ENCODE measurements at regions of chr20 and their contacts with region 1.

Region 1: DNA sequence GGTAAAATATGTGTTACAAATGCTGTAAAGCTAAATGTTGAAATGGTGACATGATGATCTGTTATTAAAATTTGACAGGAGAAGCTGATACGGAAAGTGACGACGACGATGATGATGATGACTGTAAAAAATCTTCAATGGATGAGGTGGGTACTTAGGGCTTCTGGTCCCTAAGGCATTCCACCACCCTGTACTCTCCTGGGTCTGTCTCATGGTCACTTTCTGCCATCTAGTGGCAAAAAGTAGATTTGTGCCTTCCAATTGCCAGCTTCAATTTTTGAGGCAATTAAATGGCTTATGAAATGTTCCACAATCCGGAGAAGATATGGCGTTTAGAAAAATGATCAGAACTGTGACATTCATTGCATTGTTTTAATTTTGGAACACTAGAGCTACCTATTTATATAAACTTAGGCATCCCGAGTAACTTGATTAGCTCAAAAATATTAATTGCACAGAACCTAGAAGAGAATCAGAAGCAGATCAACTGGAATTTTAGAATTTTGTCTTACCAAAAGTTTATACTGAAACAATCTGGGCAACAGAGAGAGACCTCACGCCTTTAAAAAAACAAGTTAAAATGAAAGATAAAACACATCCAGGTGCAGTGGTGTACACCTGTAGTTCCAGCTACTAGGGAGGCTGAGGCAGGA is 346.5 kb upstream of the PLCB4 start:
- DNase-seq: peak; percentile 23
- H3K4me3 Mint-ChIP-seq: no peak overlapping the region
- H3K27ac Mint-ChIP-seq: no peak overlapping the region
- H3K4me1 Mint-ChIP-seq: no peaks in the 10 kb centered on the region
- H3K27me3 Mint-ChIP-seq: no peaks in the 10 kb centered on the region

Region 2: DNA sequence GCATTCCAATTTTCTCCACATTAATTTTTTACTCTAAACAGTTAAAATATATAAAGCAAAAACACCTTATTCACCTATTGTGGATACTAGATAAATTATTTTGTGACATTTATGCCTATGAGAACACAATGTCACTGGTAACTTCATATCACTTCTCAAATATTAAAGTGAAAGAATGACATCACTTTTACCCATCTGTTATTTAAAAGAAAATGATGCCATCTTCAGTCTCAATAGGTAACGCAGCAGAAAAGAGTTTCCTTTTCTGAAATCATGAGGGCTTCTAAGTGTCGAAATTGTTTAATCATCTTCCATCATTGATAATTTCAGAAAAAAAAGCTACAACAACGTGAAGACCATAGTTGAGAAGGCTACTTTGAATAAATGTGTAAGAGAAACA is 785.1 kb before region 1 on chr20:
- CTCF ChIA-PET with region 1: interaction called, 22 read pairs
- POLR2A ChIA-PET with region 1: no interaction called
- DNase-seq: no peak
- H3K4me3 Mint-ChIP-seq: no peak overlapping the region
- H3K27ac Mint-ChIP-seq: no peak overlapping the region
- H3K4me1 Mint-ChIP-seq: no peaks in the 10 kb centered on the region
- H3K27me3 Mint-ChIP-seq: peaks cover 11% of the 10 kb centered on the region

Region 3: GRCh38 chr20:8043687-8044282 is 678.6 kb before region 1 on chr20:
- CTCF ChIA-PET with region 1: interaction called, 49 read pairs
- POLR2A ChIA-PET with region 1: no interaction called
- DNase-seq: no peak
- H3K4me3 Mint-ChIP-seq: no peak overlapping the region
- H3K27ac Mint-ChIP-seq: no peak overlapping the region
- H3K4me1 Mint-ChIP-seq: peaks cover 1% of the 10 kb centered on the region
- H3K27me3 Mint-ChIP-seq: peaks cover 21% of the 10 kb centered on the region

Region 4: DNA sequence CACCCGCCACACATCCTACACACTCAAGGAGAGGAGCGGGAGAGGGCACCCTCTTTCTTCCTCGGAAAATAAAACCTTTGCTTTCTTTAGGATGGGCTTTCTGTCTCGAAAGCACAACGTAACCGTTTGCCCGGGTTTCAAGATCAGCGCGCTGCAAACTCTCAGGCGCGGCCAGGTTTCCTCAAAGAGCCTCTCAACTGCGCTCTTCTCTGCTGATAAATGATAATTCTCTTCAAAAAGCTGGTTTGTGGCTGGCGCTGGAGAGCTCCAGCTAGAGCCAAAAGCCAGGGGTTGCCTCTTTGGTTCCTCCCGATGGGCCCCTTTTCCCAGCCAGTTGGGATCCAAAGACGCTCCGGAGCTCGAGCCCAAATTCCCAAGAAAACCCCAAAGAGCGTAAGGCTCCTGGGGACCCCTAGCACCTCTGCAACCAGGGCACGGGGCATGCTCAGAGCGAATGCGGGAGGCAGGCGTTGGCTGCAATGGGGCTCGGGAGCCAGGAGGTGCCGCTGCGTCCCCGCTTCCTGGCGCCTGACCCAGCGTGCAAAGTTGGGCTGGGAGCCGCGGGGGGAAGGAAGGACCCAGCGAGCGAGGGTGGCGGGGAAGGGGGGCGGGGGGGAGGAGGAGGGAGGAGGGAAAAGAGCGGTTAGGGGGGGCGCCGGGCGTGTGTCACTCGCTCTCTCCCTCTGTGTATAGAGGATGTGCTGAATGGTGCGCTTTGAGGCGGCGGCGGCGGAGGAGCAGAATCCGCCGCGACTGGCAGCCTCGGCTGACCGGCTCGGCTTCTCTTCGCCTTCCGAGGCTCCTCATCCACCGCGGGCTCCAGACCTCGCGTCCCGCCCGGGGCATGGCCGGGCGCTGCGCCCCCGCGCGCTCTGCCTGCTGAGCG is 590.6 kb before region 1 on chr20 and contains the start of gene PLCB1:
- CTCF ChIA-PET with region 1: interaction called, 13 read pairs
- POLR2A ChIA-PET with region 1: no interaction called
- DNase-seq: peak; percentile 79
- H3K4me3 Mint-ChIP-seq: peak within 1 kb of the TSS; percentile 68
- H3K27ac Mint-ChIP-seq: no peak within 1 kb of the TSS
- H3K4me1 Mint-ChIP-seq: peaks cover 23% of the 10 kb centered on the region
- H3K27me3 Mint-ChIP-seq: peaks cover 48% of the 10 kb centered on the region
- total RNA-seq, gene PLCB1: 1.9 to 2.2 TPM

Region 5: DNA sequence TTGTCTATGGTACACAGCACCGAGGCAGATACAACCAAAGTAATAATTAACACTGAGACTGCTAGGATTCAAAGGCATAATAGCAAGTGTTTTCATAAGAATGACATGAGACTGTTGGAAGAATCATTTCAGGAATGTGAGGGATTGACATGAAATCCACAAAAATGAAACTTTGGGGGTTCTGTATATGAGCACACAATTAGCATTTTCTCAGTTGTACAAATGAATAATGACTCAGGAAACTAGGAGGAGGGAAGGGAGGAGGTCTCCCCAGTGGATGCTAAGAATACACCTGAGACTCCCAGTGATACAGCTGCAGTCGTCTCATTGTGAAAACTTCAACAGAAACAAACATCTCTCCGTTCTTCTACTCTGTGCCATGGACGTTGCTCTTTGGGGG is 81.9 kb before region 1 on chr20:
- CTCF ChIA-PET with region 1: no interaction called
- POLR2A ChIA-PET with region 1: no interaction called
- DNase-seq: no peak
- H3K4me3 Mint-ChIP-seq: no peak overlapping the region
- H3K27ac Mint-ChIP-seq: no peak overlapping the region
- H3K4me1 Mint-ChIP-seq: no peaks in the 10 kb centered on the region
- H3K27me3 Mint-ChIP-seq: no peaks in the 10 kb centered on the region

Region 6: DNA sequence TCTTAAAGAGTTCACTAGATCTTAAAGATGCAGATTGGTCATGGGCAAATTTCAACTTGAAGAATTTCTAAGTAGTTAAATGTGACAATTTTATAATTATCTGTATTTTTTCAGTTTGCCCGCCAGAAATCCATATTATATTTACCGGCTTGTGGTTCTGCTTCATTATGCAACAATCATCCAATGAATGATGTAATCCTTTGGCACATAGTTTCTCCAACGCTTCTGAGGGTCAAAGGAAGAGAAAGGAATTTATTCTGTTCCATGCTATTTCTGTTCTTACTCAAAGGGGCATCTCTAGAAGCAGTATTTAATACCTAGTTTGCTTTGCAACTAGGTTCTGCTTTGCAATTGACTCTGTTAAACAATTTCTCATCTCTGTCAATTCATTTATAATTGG is 12.8 kb before region 1 on chr20:
- CTCF ChIA-PET with region 1: interaction called, 17 read pairs
- POLR2A ChIA-PET with region 1: no interaction called
- DNase-seq: no peak
- H3K4me3 Mint-ChIP-seq: no peak overlapping the region
- H3K27ac Mint-ChIP-seq: no peak overlapping the region
- H3K4me1 Mint-ChIP-seq: no peaks in the 10 kb centered on the region
- H3K27me3 Mint-ChIP-seq: no peaks in the 10 kb centered on the region